ENCODE measurements at regions of chr9 and their contacts with region 1.

Region 1: DNA sequence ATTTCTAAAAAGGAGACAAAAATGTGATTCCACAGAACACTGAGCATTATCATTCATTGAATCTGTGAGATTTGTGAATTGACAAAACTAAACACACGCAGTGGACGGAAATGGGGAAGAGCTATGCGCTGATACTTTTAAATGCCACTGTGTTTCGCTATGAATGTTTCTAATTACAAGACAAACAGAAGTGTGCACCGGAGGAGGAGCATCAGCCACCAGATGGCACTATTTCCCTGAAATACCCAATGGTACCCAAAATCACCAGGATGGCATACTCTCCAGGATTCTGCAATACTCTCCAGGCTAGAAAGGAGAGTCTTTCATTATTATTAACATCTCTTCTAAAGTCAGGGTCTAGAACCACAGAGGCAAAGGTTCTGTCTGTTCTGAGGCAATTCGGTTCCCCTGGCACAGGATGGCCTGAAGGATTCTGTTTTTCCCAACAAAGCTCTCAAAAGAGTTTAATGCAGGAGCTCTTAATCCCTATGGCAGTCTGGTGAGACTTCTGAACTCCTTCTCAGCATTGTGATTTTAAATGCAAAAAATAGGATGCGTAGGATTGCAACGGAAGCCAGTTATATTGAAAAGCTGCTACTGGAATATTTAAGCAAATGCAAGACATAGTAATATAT is 13.8 kb upstream of the PUM3 start:
- DNase-seq: peak; percentile 81
- ATAC-seq: peak; percentile 93
- H3K4me3 Mint-ChIP-seq: no peak overlapping the region
- H3K27ac Mint-ChIP-seq: no peak overlapping the region
- H3K4me1 Mint-ChIP-seq: peaks cover 2% of the 10 kb centered on the region
- H3K27me3 Mint-ChIP-seq: peaks cover 25% of the 10 kb centered on the region

Region 2: DNA sequence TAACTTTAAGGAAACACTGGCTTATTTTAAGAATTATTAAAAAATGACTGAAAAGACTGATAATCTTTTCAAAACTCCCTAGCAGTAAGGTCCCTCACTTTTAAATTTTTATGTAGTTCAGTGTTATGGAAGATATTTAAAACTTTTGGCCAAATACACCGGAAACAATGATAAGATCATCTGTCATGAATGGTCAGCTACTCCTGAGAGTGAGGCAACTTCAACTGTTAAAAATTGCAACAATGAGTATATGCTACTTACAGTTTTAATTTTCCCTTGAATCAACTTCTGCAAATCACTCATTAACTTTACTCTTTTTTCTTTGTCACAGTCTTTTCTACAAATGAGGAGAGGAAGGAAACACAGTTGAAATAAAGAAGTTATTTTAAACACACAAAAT is 24.6 kb before region 1 on chr9:
- CTCF ChIA-PET with region 1: no interaction called
- POLR2A ChIA-PET with region 1: no interaction called
- intact Hi-C with region 1: no loop called
- DNase-seq: no peak
- ATAC-seq: no peak
- H3K4me3 Mint-ChIP-seq: no peak overlapping the region
- H3K27ac Mint-ChIP-seq: no peak overlapping the region
- H3K4me1 Mint-ChIP-seq: peaks cover 9% of the 10 kb centered on the region
- H3K27me3 Mint-ChIP-seq: no peaks in the 10 kb centered on the region

Region 3: GRCh38 chr9:2872257-2872935 is 14.7 kb after region 1 on chr9:
- CTCF ChIA-PET with region 1: interaction called, 10 read pairs
- POLR2A ChIA-PET with region 1: no interaction called
- intact Hi-C with region 1: no loop called
- DNase-seq: no peak
- ATAC-seq: no peak
- H3K4me3 Mint-ChIP-seq: no peak overlapping the region
- H3K27ac Mint-ChIP-seq: no peak overlapping the region
- H3K4me1 Mint-ChIP-seq: peaks cover 10% of the 10 kb centered on the region
- H3K27me3 Mint-ChIP-seq: peaks cover 12% of the 10 kb centered on the region

Region 4: DNA sequence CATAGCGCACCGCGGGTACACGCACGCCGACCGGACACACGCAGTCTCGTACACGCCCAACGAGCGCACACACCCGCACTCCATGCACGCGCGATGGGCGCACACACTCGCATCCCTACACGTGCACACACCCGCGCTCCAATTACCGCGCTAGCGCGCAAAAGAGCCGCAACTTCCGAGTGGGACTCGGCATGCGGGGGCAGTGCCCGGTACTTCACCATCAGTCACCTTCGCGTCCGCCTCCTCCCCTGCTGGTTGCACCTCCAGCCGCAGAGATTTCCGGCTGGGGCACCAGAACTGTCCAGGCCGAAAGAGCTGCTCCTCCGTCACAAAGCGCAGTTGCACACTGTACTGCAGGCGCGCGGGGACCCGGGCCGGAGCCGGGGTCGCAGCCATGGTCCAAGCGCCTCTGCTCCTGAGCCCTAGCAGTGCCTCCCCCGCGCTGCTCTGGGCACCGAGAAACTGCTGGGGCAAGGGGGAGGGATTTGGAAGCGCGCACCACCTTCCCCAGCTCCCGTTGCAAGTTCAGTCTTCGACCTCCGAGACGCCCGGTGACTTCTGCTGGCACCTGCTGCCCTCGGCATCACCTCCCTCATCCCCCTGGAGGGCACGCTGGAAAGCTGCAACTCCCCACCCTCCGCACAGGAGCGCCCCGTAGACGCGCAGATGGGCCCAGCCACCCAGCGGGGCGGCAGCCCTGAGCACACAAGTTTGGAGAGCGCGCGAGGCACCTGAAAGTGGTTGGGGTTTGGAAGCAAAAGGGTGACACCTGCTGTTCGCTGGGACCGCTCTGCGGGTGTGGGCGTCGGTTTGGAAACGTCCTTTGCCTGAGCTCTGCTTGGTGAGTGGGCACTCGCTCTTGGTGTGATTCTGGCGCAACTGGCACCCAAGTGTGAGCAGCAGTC is 323.6 kb after region 1 on chr9:
- CTCF ChIA-PET with region 1: interaction called, 10 read pairs
- POLR2A ChIA-PET with region 1: no interaction called
- intact Hi-C with region 1: loop called (anchors 1 kb)
- DNase-seq: peak; percentile 77
- ATAC-seq: peak; percentile 83
- H3K4me3 Mint-ChIP-seq: peak overlapping the region; percentile 60
- H3K27ac Mint-ChIP-seq: no peak overlapping the region
- H3K4me1 Mint-ChIP-seq: peaks cover 2% of the 10 kb centered on the region
- H3K27me3 Mint-ChIP-seq: peaks cover 36% of the 10 kb centered on the region

Region 5: GRCh38 chr9:3441197-3441816 is 583.6 kb after region 1 on chr9:
- CTCF ChIA-PET with region 1: interaction called, 7 read pairs
- POLR2A ChIA-PET with region 1: no interaction called
- intact Hi-C with region 1: loop called (anchors 10 kb)
- DNase-seq: peak; percentile 66
- ATAC-seq: peak; percentile 70
- H3K4me3 Mint-ChIP-seq: no peak overlapping the region
- H3K27ac Mint-ChIP-seq: no peak overlapping the region
- H3K4me1 Mint-ChIP-seq: peaks cover 8% of the 10 kb centered on the region
- H3K27me3 Mint-ChIP-seq: no peaks in the 10 kb centered on the region

Measured in activated CD4-positive, alpha-beta T cell treated with anti-CD3 and anti-CD28 coated beads for 36 hours (primary cell).